MCF 10A (cell line): ENCODE measurements at regions of chr1 and their contacts with region 1.

Region 1: GRCh38 chr1:170074250-170075157 is at the start of gene KIFAP3:
- DNase-seq: peak; percentile 100
- H3K4me3 Mint-ChIP-seq: peak within 1 kb of the TSS; percentile 84
- H3K27ac Mint-ChIP-seq: peak within 1 kb of the TSS; percentile 83
- H3K4me1 Mint-ChIP-seq: peaks cover 27% of the 10 kb centered on the region
- H3K27me3 Mint-ChIP-seq: no peaks in the 10 kb centered on the region
- CTCF ChIP-seq: peak; percentile 52
- total RNA-seq, gene KIFAP3: 29.2 and 41.1 TPM in 2 replicates

Region 2: GRCh38 chr1:169928438-169929209 is 145.9 kb before region 1 on chr1:
- CTCF ChIA-PET with region 1: interaction called, 3 read pairs
- POLR2A ChIA-PET with region 1: interaction called, 3 read pairs
- intact Hi-C with region 1: loop called (anchors 2 kb)
- DNase-seq: peak; percentile 67
- H3K4me3 Mint-ChIP-seq: no peak overlapping the region
- H3K27ac Mint-ChIP-seq: no peak overlapping the region
- H3K4me1 Mint-ChIP-seq: no peaks in the 10 kb centered on the region
- H3K27me3 Mint-ChIP-seq: no peaks in the 10 kb centered on the region
- CTCF ChIP-seq: peak; percentile 84

Region 3: GRCh38 chr1:170049176-170049800 is 25.2 kb before region 1 on chr1:
- CTCF ChIA-PET with region 1: interaction called, 11 read pairs
- POLR2A ChIA-PET with region 1: no interaction called
- intact Hi-C with region 1: no loop called
- DNase-seq: no peak
- H3K4me3 Mint-ChIP-seq: no peak overlapping the region
- H3K27ac Mint-ChIP-seq: no peak overlapping the region
- H3K4me1 Mint-ChIP-seq: no peaks in the 10 kb centered on the region
- H3K27me3 Mint-ChIP-seq: no peaks in the 10 kb centered on the region
- CTCF ChIP-seq: no peak

Region 4: GRCh38 chr1:170085091-170085490 is 10.6 kb after region 1 on chr1:
- CTCF ChIA-PET with region 1: interaction called, 13 read pairs
- POLR2A ChIA-PET with region 1: no interaction called
- intact Hi-C with region 1: no loop called
- DNase-seq: no peak
- H3K4me3 Mint-ChIP-seq: no peak overlapping the region
- H3K27ac Mint-ChIP-seq: no peak overlapping the region
- H3K4me1 Mint-ChIP-seq: no peaks in the 10 kb centered on the region
- H3K27me3 Mint-ChIP-seq: no peaks in the 10 kb centered on the region
- CTCF ChIP-seq: no peak

Region 5: DNA sequence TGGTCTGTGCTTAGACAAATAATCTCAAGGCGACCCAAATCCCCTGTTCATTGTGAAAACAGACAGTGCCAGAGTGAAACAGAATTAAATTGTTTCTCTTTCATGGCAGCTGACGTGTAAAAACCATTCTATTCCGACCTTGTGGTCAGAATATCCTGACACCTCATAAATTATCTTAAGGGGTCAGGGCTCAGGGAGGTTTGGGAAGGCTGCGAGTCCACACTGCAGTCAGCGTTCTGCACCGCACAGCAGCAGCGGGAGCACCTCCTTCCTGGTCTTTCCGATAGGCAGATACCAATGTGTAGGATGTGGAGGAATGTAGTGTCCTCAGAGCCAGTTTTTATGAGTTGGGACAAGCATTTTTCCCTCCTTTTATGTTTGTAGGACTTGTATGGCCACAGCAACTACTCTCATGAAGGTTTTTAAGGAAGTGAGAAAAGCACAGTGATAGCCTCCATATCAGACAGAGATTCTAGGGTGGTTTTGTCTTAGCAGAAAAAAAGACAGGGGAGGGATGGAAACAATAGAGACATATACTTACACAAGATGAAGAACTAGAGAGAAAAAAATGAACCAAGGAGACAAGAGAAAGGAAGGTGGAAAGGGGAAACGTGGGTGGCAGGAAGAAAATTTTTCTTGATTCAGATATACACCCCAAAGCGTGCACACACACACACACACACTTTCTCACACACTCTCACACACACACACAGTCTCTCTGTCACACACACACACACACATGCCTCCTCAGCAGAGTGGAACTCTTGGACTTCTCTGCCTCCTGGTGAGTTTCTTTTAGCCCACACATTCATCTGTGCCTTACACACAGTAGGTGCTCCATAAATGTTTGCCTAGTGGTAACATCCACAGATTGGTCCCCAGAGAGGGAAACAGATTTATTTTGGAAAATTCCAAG is 139.9 kb after region 1 on chr1:
- CTCF ChIA-PET with region 1: no interaction called
- POLR2A ChIA-PET with region 1: no interaction called
- intact Hi-C with region 1: no loop called
- DNase-seq: no peak
- H3K4me3 Mint-ChIP-seq: no peak overlapping the region
- H3K27ac Mint-ChIP-seq: no peak overlapping the region
- H3K4me1 Mint-ChIP-seq: no peaks in the 10 kb centered on the region
- H3K27me3 Mint-ChIP-seq: no peaks in the 10 kb centered on the region
- CTCF ChIP-seq: no peak

Region 6: GRCh38 chr1:170707959-170708655 is 633.6 kb after region 1 on chr1:
- CTCF ChIA-PET with region 1: no interaction called
- POLR2A ChIA-PET with region 1: no interaction called
- intact Hi-C with region 1: loop called (anchors 10 kb)
- DNase-seq: peak; percentile 93
- H3K4me3 Mint-ChIP-seq: no peak overlapping the region
- H3K27ac Mint-ChIP-seq: peak overlapping the region; percentile 67
- H3K4me1 Mint-ChIP-seq: peaks cover 25% of the 10 kb centered on the region
- H3K27me3 Mint-ChIP-seq: no peaks in the 10 kb centered on the region
- CTCF ChIP-seq: no peak